Left cardiac atrium (tissue), 4 donors: ENCODE measurements at regions of chr2 and their contacts with region 1.

Region 1: DNA sequence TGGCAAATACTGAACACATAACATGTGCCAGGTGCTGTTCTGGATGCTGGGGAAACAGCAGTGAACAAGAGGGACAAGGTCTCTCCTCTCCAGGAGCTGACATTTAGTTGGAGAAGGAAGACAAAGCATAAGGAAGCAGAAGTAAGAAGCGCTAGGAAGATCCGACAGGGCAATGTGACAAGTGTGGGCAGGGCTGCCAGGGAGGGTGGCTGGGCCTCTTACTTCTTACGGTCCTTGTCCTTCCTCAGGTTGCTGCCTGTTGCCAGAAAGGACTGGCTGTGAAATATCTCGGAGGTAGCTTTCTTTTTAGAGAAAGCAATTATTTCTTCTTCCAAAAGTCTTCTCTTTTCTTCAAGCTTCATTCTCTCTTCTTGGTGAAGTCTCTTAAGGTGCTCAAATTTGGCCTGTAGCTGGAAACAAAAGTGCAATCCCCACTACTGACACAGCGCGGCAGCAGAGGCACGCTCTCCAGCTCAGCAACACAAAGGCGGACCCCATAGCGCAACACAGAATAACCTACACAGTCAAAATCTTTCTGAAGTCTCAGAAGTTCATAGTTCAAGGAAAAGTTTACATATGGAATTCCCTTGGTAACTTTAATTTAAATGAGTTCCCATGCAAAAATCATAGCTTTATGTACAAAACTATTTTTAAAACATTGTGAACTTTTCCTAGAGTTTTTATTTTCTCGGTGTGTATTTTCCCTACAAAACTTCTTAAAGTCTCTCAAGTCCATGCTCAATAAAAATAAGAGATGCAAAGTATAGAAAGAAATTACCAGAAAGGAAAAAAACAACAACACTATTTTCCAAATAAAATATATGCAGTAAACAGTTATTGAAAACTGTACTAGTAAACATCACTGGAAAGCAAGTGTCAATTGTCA is 67.7 kb downstream of the SEPTIN10 start:
- DNase-seq: peak; percentile 64
- ATAC-seq: peak; percentile 86 to 91

Region 2: DNA sequence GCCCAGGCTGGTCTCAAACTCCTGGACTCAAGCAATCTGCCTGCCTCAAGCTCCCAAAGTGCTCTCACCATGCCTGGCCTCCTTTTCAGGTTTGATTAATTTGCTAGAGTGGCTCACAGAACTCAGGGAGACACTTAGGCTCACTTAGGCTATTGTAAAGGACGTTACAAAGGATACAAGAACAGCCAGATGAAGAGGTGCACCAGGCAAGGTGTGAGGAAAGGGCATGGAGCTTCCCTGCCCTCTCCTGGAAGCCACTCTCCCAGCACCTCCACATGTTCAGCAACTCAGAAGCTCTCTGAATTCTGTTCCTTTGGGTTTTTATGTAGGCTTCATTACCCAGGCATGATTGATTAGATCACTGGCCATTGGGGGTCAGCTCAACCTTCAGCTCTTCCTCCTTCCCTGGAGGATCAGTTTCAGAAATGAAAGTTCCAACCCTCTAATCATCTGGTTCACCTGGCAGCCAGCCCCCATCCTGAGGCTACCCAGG is 169.3 kb after region 1 on chr2:
- intact Hi-C with region 1: loop called in 1 of 2 experiments (anchors 5 kb)
- DNase-seq: no peak
- ATAC-seq: peak; percentile 71 to 76

Region 3: GRCh38 chr2:109736177-109736827 is 190.2 kb after region 1 on chr2:
- intact Hi-C with region 1: loop called in 1 of 2 experiments (anchors 2 kb)
- DNase-seq: peak; percentile 43
- ATAC-seq: peak; percentile 66 to 70

Region 4: DNA sequence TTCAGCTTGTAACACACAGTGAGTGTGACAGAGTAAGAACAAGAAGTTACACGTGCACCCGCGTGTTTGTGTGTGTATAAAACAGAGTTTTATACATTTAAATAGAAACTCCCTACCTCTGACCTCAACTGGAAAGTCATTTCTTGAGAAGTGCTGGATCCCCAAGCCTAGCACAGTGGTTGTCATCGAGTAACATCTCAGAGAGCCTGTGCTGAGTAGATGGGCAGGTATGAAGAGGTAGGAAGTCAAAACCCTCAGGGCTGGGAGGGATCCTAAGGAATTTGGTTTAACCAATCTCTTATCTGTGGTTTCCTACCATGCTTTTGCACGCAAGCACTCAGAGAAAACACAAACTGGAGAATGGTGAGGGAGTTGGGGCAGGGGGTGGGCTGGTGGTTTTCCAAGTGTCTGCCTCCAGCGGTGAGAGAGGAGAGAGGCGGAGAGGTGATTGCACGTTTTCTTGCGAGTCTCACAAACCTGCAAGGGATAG is 1195.5 kb after region 1 on chr2:
- intact Hi-C with region 1: no loop called
- DNase-seq: no peak
- ATAC-seq: no peak